ENCODE measurements at regions of chr18 and their contacts with region 1.

Region 1: GRCh38 chr18:74944676-74945075 is 264.3 kb downstream of the PTGR3 start:
- DNase-seq: no peak
- ATAC-seq: no peak
- H3K4me3 Mint-ChIP-seq: no peak overlapping the region
- H3K27ac Mint-ChIP-seq: no peak overlapping the region
- H3K4me1 Mint-ChIP-seq: peaks cover 25% of the 10 kb centered on the region
- H3K27me3 Mint-ChIP-seq: no peaks in the 10 kb centered on the region
- CTCF ChIP-seq: no peak

Region 2: DNA sequence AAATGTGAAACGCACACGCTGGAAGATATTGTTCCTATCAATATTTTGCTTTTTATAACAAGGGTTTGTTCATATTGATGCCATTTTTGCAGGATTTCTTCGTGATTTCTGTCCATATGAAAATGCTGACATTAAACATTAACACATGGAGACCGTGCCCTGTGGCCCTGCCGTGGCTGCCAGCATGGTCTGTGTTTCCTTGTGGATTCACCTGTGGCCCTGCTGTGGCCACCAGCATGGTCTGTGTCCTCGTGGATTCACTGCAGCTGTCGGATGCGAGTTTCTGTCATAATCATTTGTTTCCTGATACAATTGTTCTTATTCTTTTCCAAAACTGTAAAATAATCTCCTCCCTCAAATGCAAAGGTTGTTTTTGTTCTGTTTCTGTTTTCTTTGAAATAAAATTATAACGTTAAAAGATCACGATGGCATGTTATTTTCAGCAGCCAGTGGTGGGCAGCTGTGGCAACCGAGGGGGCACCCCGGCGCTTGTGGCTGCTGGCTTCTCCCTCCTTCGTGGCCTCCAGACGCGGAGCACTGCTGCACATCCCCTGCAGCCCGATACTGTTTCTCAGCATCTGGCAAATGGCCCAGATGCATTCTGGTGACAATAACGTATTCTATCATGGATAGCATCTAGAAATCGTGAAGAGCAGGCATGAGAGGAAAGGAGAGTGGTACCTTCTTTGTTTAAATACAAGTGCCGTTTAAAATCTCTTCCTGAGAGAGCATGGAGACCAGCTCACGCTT is 120.8 kb after region 1 on chr18:
- CTCF ChIA-PET with region 1: no interaction called
- POLR2A ChIA-PET with region 1: interaction called, 11 read pairs
- intact Hi-C with region 1: no loop called
- DNase-seq: no peak
- ATAC-seq: no peak
- H3K4me3 Mint-ChIP-seq: no peak overlapping the region
- H3K27ac Mint-ChIP-seq: peak overlapping the region; percentile 26
- H3K4me1 Mint-ChIP-seq: peaks cover 20% of the 10 kb centered on the region
- H3K27me3 Mint-ChIP-seq: no peaks in the 10 kb centered on the region
- CTCF ChIP-seq: no peak

Region 3: GRCh38 chr18:76709659-76710645 is 1765.3 kb after region 1 on chr18:
- CTCF ChIA-PET with region 1: no interaction called
- POLR2A ChIA-PET with region 1: no interaction called
- intact Hi-C with region 1: no loop called
- DNase-seq: peak; percentile 34
- ATAC-seq: peak; percentile 79
- H3K4me3 Mint-ChIP-seq: no peak overlapping the region
- H3K27ac Mint-ChIP-seq: no peak overlapping the region
- H3K4me1 Mint-ChIP-seq: peaks cover 2% of the 10 kb centered on the region
- H3K27me3 Mint-ChIP-seq: no peaks in the 10 kb centered on the region
- CTCF ChIP-seq: no peak

Measured in activated B cell treated with CpG ODN at 0.5 μM for 24 hours (primary cell).